ENCODE measurements at regions of chr7 and their contacts with region 1.

Region 1: GRCh38 chr7:28096713-28097112 is 83.9 kb downstream of the JAZF1 start:
- DNase-seq: no peak
- ATAC-seq: peak; percentile 80; the same call in 1 of the 2 replicates
- H3K4me3 ChIP-seq: no peak overlapping the region
- H3K27ac ChIP-seq: no peak overlapping the region
- H3K4me1 ChIP-seq: no peaks in the 10 kb centered on the region
- H3K27me3 ChIP-seq: no peaks in the 10 kb centered on the region
- CTCF ChIP-seq: peak; percentile 91

Region 2: GRCh38 chr7:27179503-27180430 is 916.9 kb before region 1 on chr7:
- CTCF ChIA-PET with region 1: interaction called, 13 read pairs
- POLR2A ChIA-PET with region 1: no interaction called
- in situ Hi-C with region 1: no loop called
- intact Hi-C with region 1: no loop called
- DNase-seq: no peak
- ATAC-seq: peak; percentile 83
- H3K4me3 ChIP-seq: peak overlapping the region; percentile 32 to 52
- H3K27ac ChIP-seq: peak overlapping the region; percentile 57
- H3K4me1 ChIP-seq: peaks cover 15% of the 10 kb centered on the region; the same call in 1 of the 2 replicates
- H3K27me3 ChIP-seq: no peaks in the 10 kb centered on the region
- CTCF ChIP-seq: peak; percentile 99

Region 3: GRCh38 chr7:27739909-27740448 is 356.7 kb before region 1 on chr7 and contains the start of gene TAX1BP1:
- CTCF ChIA-PET with region 1: interaction called, 6 read pairs
- POLR2A ChIA-PET with region 1: no interaction called
- in situ Hi-C with region 1: no loop called
- intact Hi-C with region 1: loop called (anchors 10 kb)
- DNase-seq: peak; percentile 72
- ATAC-seq: peak; percentile 96
- H3K4me3 ChIP-seq: peak within 1 kb of the TSS; percentile 97 to 99
- H3K27ac ChIP-seq: peak within 1 kb of the TSS; percentile 96
- H3K4me1 ChIP-seq: peaks cover 30% of the 10 kb centered on the region
- H3K27me3 ChIP-seq: no peaks in the 10 kb centered on the region
- CTCF ChIP-seq: no peak
- total RNA-seq, gene TAX1BP1: 125 TPM

Region 4: GRCh38 chr7:27921081-27921836 is 175.5 kb before region 1 on chr7:
- CTCF ChIA-PET with region 1: interaction called, 3 read pairs
- POLR2A ChIA-PET with region 1: no interaction called
- in situ Hi-C with region 1: no loop called
- intact Hi-C with region 1: loop called (anchors 10 kb)
- DNase-seq: peak; percentile 61
- ATAC-seq: peak; percentile 82
- H3K4me3 ChIP-seq: peak overlapping the region in 1 of 2 experiments; percentile 22; a peak in 1 of 4 replicates
- H3K27ac ChIP-seq: peak overlapping the region; percentile 52
- H3K4me1 ChIP-seq: peaks cover 18% of the 10 kb centered on the region; the same call in 1 of the 2 replicates
- H3K27me3 ChIP-seq: no peaks in the 10 kb centered on the region
- CTCF ChIP-seq: peak; percentile 75

Region 5: DNA sequence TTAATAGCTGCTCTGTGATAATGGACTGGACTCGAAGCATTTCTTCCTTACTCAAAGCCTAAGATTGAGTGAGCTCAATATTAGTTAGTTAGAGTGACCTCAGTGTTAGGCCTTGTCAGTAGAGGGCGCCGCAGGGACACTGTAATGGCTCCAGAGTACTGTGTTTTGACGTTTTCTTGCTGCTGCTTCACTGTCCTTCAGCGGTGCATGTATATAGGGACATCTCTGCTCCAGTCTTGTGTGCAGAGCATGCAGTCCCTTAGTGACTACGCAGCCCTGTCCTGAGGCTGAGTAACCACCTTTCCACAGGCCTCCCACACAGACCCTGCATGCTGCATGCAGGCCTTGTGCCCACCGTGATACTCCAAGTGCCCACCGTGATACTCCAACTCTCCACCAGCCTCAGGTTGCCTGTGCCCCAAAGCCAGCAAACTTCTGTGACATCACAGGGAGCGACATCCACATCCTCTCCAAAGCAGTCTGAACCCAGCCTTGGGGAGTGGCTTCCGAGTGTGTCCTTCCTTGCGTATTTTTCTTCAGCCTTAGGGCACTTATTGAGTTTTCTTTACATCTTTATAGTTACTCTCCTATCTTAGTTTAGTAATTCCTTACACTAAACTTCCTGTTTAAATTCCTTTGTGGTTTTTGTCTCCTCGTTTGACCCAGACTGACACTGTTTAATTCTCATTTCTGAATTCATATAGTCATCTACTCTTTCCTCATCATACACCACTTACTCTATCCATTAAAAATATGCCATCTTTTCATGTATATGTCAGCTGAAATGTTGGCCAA is 34.3 kb before region 1 on chr7:
- CTCF ChIA-PET with region 1: interaction called, 26 read pairs
- POLR2A ChIA-PET with region 1: interaction called, 16 read pairs
- in situ Hi-C with region 1: no loop called
- intact Hi-C with region 1: no loop called
- DNase-seq: peak; percentile 43
- ATAC-seq: peak; percentile 96
- H3K4me3 ChIP-seq: no peak overlapping the region
- H3K27ac ChIP-seq: peak overlapping the region; percentile 79
- H3K4me1 ChIP-seq: peaks cover 43% of the 10 kb centered on the region
- H3K27me3 ChIP-seq: no peaks in the 10 kb centered on the region
- CTCF ChIP-seq: peak; percentile 92

Measured in Panc1 (cell line).